Gastrocnemius medialis (tissue), 4 donors: ENCODE measurements at regions of chr7 and their contacts with region 1.

Region 1: DNA sequence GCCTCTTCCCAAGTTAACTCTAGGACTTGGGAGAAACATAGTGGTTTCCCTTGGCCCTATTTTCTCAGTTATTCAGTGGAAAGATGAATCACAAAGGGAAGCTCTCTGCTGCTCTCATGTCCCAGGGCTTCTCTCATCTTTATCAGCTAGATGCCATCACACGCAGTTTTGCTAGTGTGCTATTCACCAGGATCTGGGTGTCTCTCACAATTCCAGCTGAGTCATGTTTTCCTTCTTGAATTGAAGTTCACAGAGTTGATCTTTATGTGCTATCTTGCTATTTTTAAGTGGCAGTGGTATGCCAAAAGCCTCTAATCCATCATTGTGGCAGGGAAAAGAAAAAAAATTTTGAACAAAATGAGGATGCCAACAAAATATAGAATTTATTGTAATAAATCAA is 101.3 kb downstream of the TWIST1 start:
- DNase-seq: no peak
- ATAC-seq: no peak
- H3K4me3 ChIP-seq: no peak overlapping the region
- H3K27ac ChIP-seq: no peak overlapping the region
- H3K4me1 ChIP-seq: no peaks in the 10 kb centered on the region
- H3K27me3 ChIP-seq: no peaks in the 10 kb centered on the region
- CTCF ChIP-seq: no peak
- POLR2A ChIP-seq: no peak

Region 2: GRCh38 chr7:18978108-18978495 is 38.0 kb before region 1 on chr7:
- in situ Hi-C with region 1: no loop called
- intact Hi-C with region 1: loop called (anchors 2 kb)
- DNase-seq: no peak
- ATAC-seq: peak; percentile 55 to 77
- H3K4me3 ChIP-seq: no peak overlapping the region
- H3K27ac ChIP-seq: no peak overlapping the region
- H3K4me1 ChIP-seq: peaks cover 0 to 8% of the 10 kb centered on the region in 2 donors
- H3K27me3 ChIP-seq: no peaks in the 10 kb centered on the region
- CTCF ChIP-seq: no peak
- POLR2A ChIP-seq: no peak